A549 (cell line): ENCODE measurements at regions of chr7 and their contacts with region 1.

Region 1: GRCh38 chr7:155344600-155345433 is 47.1 kb downstream of the INSIG1 start:
- DNase-seq: peak; percentile 67 to 79
- ATAC-seq: peak; percentile 83 to 96
- H3K4me3 ChIP-seq: peak overlapping the region; percentile 62
- H3K27ac ChIP-seq: peak overlapping the region; percentile 79 to 90
- H3K4me1 ChIP-seq: no peaks in the 10 kb centered on the region
- CTCF ChIP-seq: peak; percentile 98
- EP300 ChIP-seq: no peak
- POLR2A ChIP-seq: no peak
- RAD21 ChIP-seq: peak; percentile 61 to 97; a peak in 4 of 5 replicates

Region 2: GRCh38 chr7:154919344-154920225 is 425.2 kb before region 1 on chr7:
- CTCF ChIA-PET with region 1: interaction called, 26 read pairs
- POLR2A ChIA-PET with region 1: no interaction called
- DNase-seq: no peak
- ATAC-seq: no peak
- H3K4me3 ChIP-seq: no peak overlapping the region
- H3K27ac ChIP-seq: no peak overlapping the region
- H3K4me1 ChIP-seq: no peaks in the 10 kb centered on the region
- CTCF ChIP-seq: no peak
- EP300 ChIP-seq: no peak
- POLR2A ChIP-seq: no peak
- RAD21 ChIP-seq: no peak

Region 3: DNA sequence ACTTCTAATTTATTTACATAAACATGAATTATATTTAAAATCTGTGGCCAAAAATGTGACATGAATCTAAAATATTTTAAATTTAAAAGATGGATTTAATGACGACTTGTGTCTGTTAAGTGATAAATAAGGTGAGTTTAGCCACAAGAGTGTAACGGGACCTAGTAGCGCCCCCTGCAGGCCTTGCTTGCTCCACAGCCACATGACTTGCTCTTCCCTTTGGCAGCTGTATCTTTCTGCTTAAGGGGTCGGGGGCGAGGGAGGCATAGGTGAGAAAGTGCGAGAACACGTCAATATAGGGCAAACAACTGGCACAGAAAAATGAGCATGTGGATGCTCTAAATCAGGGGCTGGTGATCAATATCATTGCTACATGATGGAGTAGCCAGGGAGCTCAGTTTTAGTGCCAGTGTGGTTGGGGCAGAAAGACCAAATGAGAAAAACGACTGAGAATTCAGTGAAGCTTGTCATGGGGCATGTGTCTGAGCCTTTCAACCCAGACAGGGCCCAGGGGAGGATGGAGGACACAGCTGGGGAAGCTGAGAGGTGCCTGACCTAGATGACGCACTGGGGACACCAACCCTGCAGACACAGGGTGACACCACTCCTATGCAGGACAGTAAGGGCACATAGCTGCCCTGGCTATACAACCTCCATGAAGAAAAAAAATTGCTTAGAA is 391.7 kb before region 1 on chr7:
- CTCF ChIA-PET with region 1: interaction called, 11 read pairs
- POLR2A ChIA-PET with region 1: no interaction called
- DNase-seq: peak; percentile 27 to 66
- ATAC-seq: peak; percentile 62 to 87; a peak in 4 of 6 replicates
- H3K4me3 ChIP-seq: no peak overlapping the region
- H3K27ac ChIP-seq: no peak overlapping the region
- H3K4me1 ChIP-seq: no peaks in the 10 kb centered on the region
- CTCF ChIP-seq: peak; percentile 61
- EP300 ChIP-seq: no peak
- POLR2A ChIP-seq: no peak
- RAD21 ChIP-seq: peak in 1 of 2 experiments; percentile 12; a peak in 1 of 5 replicates

Region 4: DNA sequence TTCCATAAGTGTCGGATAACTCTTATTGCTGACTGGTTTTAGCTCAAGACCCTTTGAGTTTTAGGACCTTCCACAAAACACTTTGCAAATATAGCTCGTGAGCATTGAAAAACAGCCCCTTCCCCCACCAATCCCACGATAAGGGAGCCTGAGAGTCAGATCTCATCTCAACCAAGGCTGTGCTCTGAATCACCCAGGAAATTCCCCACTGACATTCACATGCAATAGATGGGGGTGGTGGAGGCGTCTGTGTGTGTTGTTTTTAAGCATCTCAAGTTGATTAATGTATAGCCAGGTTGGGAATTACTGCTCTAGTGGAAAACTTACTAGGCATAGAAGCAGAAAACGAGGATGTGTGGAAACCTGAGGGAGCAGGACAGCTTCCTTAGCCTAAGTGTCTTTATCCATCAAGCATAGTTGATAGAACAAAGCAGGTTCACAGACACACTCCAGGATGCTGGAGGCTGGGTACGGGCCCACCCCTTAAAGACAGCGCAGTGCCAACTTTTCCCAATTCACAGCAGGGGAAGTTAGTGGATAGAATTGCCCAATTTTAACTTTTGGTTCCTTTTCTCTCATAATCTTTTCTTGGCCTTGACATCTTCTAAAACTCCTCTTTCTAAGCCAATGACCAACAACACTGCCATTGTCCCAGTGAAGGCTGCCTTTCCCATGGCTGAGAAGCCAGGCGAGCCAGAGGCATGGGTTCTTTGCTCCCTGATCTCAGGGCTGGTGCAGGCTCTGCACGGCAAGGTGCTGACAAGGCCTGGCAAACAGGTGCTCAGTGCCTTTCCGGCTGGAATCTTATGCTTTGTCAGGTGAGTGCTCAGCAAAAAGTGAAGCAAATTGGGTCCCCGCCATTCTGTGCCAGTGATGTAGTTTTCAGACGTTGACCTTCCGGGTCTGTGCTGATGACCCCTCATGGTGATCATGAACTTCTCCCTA is 145.6 kb before region 1 on chr7:
- CTCF ChIA-PET with region 1: interaction called, 68 read pairs
- POLR2A ChIA-PET with region 1: no interaction called
- DNase-seq: peak; percentile 33 to 50
- ATAC-seq: peak; percentile 71; a peak in 5 of 6 replicates
- H3K4me3 ChIP-seq: no peak overlapping the region
- H3K27ac ChIP-seq: peak overlapping the region in 1 of 2 experiments; percentile 67; a peak in 3 of 6 replicates
- H3K4me1 ChIP-seq: peaks cover 13% of the 10 kb centered on the region; the same call in 1 of the 3 replicates
- CTCF ChIP-seq: no peak
- EP300 ChIP-seq: no peak
- POLR2A ChIP-seq: no peak
- RAD21 ChIP-seq: no peak

Region 5: DNA sequence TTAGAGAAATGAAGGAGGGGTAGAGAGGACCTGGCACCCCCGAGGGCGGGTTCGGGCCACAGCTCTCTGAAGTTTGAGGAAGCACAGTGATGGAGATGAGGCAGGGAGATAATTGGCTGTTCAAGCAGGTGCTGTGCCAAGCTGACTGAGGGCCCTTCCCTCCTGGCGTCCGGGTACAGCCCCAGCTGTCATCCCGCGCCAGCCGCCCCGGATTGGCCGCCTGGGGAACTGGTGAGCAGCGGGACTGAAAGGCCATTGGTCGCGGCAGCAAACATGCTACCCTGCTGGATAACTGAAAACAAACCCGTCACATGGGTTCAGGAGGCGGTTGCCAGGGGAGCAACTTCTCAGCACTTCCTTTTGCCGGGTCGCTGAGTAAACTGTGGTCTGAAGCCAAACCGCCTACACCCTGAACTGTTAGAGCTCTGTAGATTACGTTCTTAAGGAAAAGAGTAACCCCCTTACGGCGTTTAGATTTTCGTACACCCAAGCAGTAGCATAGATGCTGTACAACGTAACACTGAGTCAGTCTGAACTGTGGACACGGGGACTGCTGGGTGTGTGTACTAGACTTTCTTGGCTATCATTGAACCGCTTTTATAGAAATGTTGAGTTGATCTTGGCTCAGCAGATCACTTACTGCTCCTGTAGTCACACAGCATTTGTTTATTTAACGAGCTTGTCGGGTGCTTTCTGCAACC is 45.8 kb before region 1 on chr7:
- CTCF ChIA-PET with region 1: interaction called, 15 read pairs
- POLR2A ChIA-PET with region 1: interaction called, 4 read pairs
- DNase-seq: peak; percentile 93 to 98
- ATAC-seq: peak; percentile 83 to 93
- H3K4me3 ChIP-seq: peak overlapping the region; percentile 90
- H3K27ac ChIP-seq: peak overlapping the region; percentile 98
- H3K4me1 ChIP-seq: peaks cover 23% of the 10 kb centered on the region
- CTCF ChIP-seq: no peak
- EP300 ChIP-seq: no peak
- POLR2A ChIP-seq: no peak
- RAD21 ChIP-seq: no peak

Region 6: GRCh38 chr7:155333346-155334234 is 11.2 kb before region 1 on chr7:
- CTCF ChIA-PET with region 1: interaction called, 33 read pairs
- POLR2A ChIA-PET with region 1: no interaction called
- DNase-seq: no peak
- ATAC-seq: peak; percentile 52 to 64
- H3K4me3 ChIP-seq: no peak overlapping the region
- H3K27ac ChIP-seq: no peak overlapping the region
- H3K4me1 ChIP-seq: no peaks in the 10 kb centered on the region
- CTCF ChIP-seq: no peak
- EP300 ChIP-seq: no peak
- POLR2A ChIP-seq: no peak
- RAD21 ChIP-seq: no peak

Region 7: GRCh38 chr7:155363852-155364562 is 19.2 kb after region 1 on chr7:
- CTCF ChIA-PET with region 1: interaction called, 11 read pairs
- POLR2A ChIA-PET with region 1: no interaction called
- DNase-seq: no peak
- ATAC-seq: 0 out of 6 replicates have a peak, but pooled peaks of 1 of the 2 experiments have one; percentile 19
- H3K4me3 ChIP-seq: no peak overlapping the region
- H3K27ac ChIP-seq: no peak overlapping the region
- H3K4me1 ChIP-seq: no peaks in the 10 kb centered on the region
- CTCF ChIP-seq: no peak
- EP300 ChIP-seq: no peak
- POLR2A ChIP-seq: no peak
- RAD21 ChIP-seq: no peak